Left ventricle myocardium superior (tissue), 1 donor: ENCODE measurements at regions of chr18 and their contacts with region 1.

Region 1: DNA sequence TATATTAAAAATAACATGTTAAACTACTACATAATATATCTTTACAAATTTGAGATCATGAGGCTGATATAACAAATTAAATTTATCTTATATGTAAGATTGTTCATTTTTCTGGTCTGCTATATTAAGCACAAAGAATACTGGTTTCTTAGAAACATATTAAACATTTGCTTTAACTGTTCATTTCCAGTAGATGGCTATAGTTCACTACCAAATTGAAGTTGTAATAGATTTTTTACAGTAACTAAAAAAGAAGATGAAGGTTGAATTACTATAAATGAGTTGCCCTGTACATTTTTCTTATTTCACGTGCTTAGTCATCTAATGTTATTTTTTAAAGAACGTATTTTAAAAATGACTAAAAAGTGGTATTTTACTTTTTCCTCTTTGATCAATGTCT is 57.0 kb downstream of the ZNF407 start:
- DNase-seq: no peak
- ATAC-seq: no peak

Region 2: DNA sequence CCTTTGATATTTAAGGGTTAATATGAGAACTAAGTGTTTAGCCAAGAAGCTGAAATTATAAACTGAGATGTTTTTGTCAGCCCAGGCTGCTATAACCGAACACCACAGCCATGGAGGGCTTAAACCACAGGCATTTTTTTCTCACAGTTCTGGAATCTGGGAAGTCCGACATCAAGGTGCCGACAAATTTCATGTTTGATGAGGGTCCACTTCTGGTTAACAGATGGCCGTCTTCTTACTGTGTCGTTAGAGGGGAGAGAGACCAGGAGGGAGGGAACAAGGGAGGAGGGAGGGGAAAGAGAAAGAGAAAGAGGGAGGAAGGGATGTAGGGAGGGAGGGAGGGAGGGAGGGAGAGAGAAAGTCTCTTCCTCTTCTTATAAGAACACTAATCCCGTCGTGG is 165.0 kb before region 1 on chr18:
- intact Hi-C with region 1: no loop called
- DNase-seq: no peak
- ATAC-seq: no peak

Region 3: GRCh38 chr18:74579496-74580065 is 75.1 kb before region 1 on chr18:
- intact Hi-C with region 1: no loop called
- DNase-seq: no peak
- ATAC-seq: no peak

Region 4: GRCh38 chr18:74597662-74598349 is 56.8 kb before region 1 on chr18 and contains the start of gene ZNF407:
- intact Hi-C with region 1: no loop called
- DNase-seq: peak; percentile 89
- ATAC-seq: peak; percentile 94
- total RNA-seq, gene ZNF407: 12.0 TPM

Region 5: DNA sequence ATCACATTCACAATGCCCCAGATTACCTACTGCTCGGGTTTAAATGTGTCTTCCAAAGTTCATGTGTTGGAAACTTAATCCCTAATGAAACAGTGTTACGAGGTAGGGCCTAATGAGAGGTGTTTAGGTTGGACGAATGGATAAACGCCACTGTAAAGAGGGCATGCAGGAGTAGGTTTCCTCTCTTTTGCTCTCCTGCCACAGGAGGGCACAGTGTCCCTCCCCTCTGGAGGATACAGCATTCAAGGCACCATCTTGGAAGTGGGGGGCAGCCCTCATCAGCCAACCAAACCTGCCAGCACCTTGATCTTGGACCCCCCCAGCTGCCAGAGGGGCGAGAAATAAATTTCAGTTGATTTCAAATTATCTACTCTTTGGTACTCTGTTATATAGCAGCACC is 659.5 kb after region 1 on chr18:
- intact Hi-C with region 1: no loop called
- DNase-seq: no peak
- ATAC-seq: no peak

Region 6: DNA sequence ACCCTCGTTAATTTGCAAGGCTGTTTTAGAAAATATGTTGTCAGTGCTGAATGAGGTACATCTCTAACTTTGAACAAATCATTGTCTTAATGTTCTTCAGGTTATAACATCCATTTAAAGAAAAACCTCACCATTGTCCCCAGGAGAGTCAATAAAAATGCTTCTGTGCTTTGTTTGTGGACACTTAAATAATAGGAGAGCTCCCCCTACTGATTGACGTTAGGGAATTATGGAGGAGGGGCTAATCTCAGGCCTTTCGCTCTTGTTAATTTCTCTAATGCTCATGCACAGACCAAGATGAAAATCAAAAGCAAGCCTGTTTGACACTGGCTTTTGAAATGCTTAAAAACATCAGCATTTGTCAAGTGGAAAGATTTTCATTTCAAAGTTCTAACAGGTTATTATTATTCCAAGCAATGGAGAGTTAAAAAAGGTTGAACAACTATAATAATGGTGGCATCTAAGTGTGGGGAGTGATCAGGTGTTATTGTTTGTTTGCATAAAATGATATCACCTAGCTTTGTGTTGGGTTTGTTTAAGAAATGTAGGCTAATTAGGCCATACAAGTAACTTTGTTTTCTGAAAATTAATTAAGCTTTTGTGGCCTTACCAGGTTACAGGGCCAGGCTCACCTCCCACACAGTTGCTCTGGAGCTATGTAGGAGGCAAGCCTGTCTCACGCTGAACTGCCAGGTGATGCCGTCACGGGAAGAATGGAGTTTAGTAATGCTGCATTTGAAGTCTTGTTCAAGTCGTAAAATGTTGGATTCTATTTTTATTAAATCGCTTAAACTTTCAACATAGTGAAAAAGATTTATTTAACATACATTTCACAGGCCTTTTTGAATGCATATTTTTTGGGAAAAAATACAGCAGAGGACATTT is 824.6 kb after region 1 on chr18:
- intact Hi-C with region 1: loop called (anchors 5 kb)
- DNase-seq: no peak
- ATAC-seq: peak; percentile 75